ENCODE measurements at regions of chr2 and their contacts with region 1.

Region 1: DNA sequence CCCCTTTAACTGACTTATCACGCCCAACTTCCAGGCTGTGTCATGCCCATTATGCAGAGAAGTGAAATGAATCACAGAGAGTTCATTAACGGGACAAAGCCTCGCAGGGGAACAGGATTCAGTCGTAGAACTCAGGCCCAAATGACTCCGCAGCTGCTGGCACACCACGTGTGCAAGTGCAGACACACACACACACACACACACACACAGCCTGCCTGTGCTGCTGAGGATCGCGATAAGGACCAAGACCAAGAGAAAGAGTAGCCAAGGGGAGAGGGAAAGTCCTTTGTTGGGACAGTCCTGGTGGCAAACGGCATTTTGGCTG is 90.0 kb upstream of the TAF1B start:
- DNase-seq: peak; percentile 80
- H3K4me3 Mint-ChIP-seq: peak overlapping the region; percentile 95
- H3K27ac Mint-ChIP-seq: peak overlapping the region; percentile 100
- H3K4me1 Mint-ChIP-seq: peaks cover 76% of the 10 kb centered on the region
- H3K27me3 Mint-ChIP-seq: peaks cover 8% of the 10 kb centered on the region

Region 2: DNA sequence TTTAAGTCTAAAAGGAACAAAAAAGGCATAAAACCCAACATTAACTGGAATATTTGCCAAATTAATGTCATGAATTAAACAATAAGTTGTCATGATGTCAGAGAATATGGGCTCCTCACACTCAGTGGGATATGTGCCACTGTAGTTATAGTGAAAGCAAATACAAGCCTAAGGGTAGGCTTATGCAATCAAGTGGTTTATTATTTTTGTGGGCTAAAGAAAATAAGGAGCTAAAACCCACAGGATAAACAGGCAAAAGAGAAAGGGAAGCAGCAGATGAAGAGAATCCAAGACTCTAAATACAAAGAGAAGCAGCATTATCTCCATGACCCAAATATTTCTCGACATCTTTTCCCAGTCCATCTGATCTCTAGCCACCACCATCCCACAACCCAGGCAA is 139.9 kb before region 1 on chr2:
- CTCF ChIA-PET with region 1: no interaction called
- POLR2A ChIA-PET with region 1: interaction called, 20 read pairs
- DNase-seq: no peak
- H3K4me3 Mint-ChIP-seq: no peak overlapping the region
- H3K27ac Mint-ChIP-seq: no peak overlapping the region
- H3K4me1 Mint-ChIP-seq: peaks cover 89% of the 10 kb centered on the region
- H3K27me3 Mint-ChIP-seq: no peaks in the 10 kb centered on the region

Region 3: GRCh38 chr2:9656270-9656766 is 96.9 kb before region 1 on chr2:
- CTCF ChIA-PET with region 1: interaction called, 4 read pairs
- POLR2A ChIA-PET with region 1: interaction called, 19 read pairs
- DNase-seq: peak; percentile 88
- H3K4me3 Mint-ChIP-seq: peak overlapping the region; percentile 63
- H3K27ac Mint-ChIP-seq: peak overlapping the region; percentile 96
- H3K4me1 Mint-ChIP-seq: peaks cover 57% of the 10 kb centered on the region
- H3K27me3 Mint-ChIP-seq: no peaks in the 10 kb centered on the region

Region 4: GRCh38 chr2:9703085-9703641 is 50.1 kb before region 1 on chr2:
- CTCF ChIA-PET with region 1: interaction called, 8 read pairs
- POLR2A ChIA-PET with region 1: interaction called, 42 read pairs
- DNase-seq: peak; percentile 96
- H3K4me3 Mint-ChIP-seq: peak overlapping the region; percentile 9
- H3K27ac Mint-ChIP-seq: peak overlapping the region; percentile 92
- H3K4me1 Mint-ChIP-seq: peaks cover 79% of the 10 kb centered on the region
- H3K27me3 Mint-ChIP-seq: no peaks in the 10 kb centered on the region

Region 5: DNA sequence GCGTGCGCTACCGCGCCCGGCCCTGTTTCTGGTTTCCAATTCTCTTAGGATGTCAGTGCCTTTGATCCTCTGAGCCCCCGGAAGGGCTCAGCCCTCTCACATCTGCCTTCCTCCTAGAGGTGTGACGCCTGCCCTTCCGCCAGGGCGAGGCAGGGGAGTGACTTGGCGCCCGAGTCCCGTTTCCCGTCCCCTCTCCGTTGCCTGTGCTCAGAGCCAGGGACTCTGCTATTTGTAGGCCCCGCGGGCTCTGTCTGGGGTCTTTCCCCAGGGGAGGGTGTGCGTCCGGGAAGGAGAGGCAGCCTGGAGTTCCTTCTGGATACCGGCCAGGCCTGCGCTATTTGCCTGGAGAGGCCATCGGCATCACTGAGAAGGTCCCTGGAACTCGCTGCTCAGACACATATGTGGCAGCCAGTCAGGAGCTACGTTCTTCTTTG is 13.7 kb before region 1 on chr2:
- CTCF ChIA-PET with region 1: interaction called, 10 read pairs
- POLR2A ChIA-PET with region 1: interaction called, 76 read pairs
- DNase-seq: peak; percentile 77
- H3K4me3 Mint-ChIP-seq: peak overlapping the region; percentile 72
- H3K27ac Mint-ChIP-seq: peak overlapping the region; percentile 93
- H3K4me1 Mint-ChIP-seq: peaks cover 61% of the 10 kb centered on the region
- H3K27me3 Mint-ChIP-seq: peaks cover 2% of the 10 kb centered on the region

Region 6: DNA sequence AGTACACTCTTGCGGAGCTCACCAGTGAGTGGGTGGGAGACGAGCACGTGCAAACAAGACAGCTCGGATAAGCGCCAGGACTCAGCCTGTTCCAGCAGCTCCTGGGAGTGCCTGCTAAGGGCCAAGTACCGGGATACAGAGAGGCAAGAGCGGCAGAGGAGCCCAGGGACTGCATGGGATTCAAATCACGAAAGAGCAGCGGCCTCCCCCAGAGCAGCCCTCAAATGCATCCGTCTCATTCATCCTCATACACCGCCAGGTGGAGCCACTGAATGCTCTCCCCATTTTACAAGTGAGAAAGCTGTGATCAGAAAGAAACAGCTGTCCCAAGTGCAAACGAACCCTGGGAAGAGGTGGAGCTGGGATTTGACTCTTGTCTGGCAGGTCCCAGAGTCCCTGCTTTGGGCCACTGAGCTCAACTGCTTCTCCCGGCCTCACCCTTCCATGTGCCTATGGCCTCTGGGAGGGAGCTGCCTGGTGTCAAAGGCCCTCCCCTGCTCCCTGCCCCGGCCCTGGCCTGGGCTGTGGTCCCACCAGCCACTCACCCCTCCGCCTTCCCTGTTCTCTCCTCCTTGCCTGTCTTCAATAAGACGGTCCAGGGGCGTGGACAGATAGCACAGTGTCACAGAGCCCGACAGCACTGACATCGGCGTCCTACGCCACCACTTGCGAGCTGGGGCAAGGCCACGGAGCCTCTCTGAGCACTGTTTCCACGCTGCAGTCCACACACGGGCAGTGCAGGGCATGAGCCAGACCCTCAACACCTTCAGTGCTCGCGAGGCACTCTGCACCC is 17.3 kb after region 1 on chr2:
- CTCF ChIA-PET with region 1: interaction called, 25 read pairs
- POLR2A ChIA-PET with region 1: interaction called, 26 read pairs
- DNase-seq: peak; percentile 73
- H3K4me3 Mint-ChIP-seq: no peak overlapping the region
- H3K27ac Mint-ChIP-seq: no peak overlapping the region
- H3K4me1 Mint-ChIP-seq: peaks cover 21% of the 10 kb centered on the region
- H3K27me3 Mint-ChIP-seq: no peaks in the 10 kb centered on the region

Region 7: GRCh38 chr2:9799665-9800632 is 46.7 kb after region 1 on chr2:
- CTCF ChIA-PET with region 1: interaction called, 15 read pairs
- POLR2A ChIA-PET with region 1: interaction called, 28 read pairs
- DNase-seq: peak; percentile 92
- H3K4me3 Mint-ChIP-seq: peak overlapping the region; percentile 72
- H3K27ac Mint-ChIP-seq: peak overlapping the region; percentile 98
- H3K4me1 Mint-ChIP-seq: peaks cover 49% of the 10 kb centered on the region
- H3K27me3 Mint-ChIP-seq: no peaks in the 10 kb centered on the region

Region 8: DNA sequence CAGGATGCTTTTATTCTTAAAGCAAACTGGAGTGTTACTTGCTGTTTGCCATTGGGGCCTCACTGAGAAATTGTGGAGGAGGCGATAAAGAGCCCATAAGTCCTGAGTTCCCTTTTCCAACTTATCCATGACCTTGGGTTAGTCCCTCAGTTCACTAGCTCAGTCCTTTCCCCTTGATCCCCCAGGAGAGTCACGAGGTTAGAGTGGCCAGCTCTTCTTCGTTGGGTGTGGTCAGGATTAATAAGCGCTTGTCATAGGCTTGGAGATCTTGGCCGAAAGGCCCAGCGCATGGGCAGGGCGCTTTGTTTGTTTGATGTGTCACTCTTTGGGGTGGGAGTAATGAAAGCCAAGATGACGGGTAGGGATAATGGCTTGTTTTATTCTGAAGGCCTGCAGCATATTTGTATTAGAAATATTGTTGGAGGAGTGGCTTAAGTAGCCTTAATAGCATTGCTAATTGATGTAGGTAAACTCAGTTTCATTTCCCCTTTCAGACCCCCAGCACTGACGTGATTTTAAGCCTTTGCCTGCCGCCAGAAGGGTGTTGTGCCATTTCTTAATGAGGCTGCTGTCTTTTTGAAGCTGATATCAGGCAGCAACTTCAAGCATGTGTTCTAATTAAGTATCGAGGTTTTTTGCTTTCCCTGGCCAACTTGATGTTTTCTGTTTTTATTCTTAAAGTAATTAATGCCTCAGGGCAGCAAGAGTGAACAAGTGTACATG is 214.0 kb after region 1 on chr2:
- CTCF ChIA-PET with region 1: no interaction called
- POLR2A ChIA-PET with region 1: no interaction called
- DNase-seq: no peak
- H3K4me3 Mint-ChIP-seq: no peak overlapping the region
- H3K27ac Mint-ChIP-seq: no peak overlapping the region
- H3K4me1 Mint-ChIP-seq: peaks cover 36% of the 10 kb centered on the region
- H3K27me3 Mint-ChIP-seq: peaks cover 1% of the 10 kb centered on the region

Measured in activated CD4-positive, alpha-beta memory T cell treated with anti-CD3 and anti-CD28 coated beads, Interleukin-2, amount 10 ng/mL, durations not matched to agents 7 days and 5 days (primary cell).